Mammary epithelial cell (primary cell): ENCODE measurements at regions of chr1 and their contacts with region 1.

Region 1: DNA sequence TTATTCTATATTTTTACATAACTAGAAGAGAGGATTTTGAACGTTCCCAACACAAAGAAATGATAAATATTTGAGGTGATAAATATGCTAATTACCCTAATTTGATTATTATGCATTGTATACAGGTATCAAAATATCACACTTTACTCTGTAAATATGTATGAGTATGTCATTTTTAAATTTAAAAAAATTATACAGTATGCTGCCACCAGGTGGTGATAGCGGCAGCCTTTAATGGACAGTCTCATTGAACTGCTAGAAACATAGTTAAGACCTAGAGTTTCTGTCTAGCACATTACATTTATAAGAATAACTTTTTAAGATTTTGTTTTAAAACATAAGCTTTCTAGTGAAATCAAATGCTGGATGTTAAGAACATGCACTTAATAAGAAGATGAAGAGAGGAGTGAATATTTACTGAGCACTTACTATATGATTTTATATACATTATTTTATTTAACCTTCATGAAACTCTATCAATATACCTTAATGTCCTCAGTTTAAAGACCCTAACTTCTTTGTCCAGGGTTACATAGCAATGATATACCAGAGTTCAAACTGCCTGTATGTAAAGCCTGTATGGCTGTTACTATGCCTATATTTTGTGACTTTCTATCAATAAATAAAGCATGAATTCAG is 207.1 kb downstream of the NUF2 start:
- DNase-seq: peak; percentile 5
- H3K4me3 ChIP-seq: no peak overlapping the region
- H3K27ac ChIP-seq: no peak overlapping the region
- H3K4me1 ChIP-seq: no peaks in the 10 kb centered on the region
- H3K27me3 ChIP-seq: no peaks in the 10 kb centered on the region
- CTCF ChIP-seq: peak; percentile 51 to 62

Region 2: GRCh38 chr1:162847839-162848453 is 680.9 kb before region 1 on chr1:
- CTCF ChIA-PET with region 1: no interaction called
- dilution Hi-C with region 1: no loop called
- in situ Hi-C with region 1: no loop called
- intact Hi-C with region 1: loop called (anchors 10 kb)
- DNase-seq: peak; percentile 46
- H3K4me3 ChIP-seq: no peak overlapping the region
- H3K27ac ChIP-seq: no peak overlapping the region
- H3K4me1 ChIP-seq: no peaks in the 10 kb centered on the region
- H3K27me3 ChIP-seq: no peaks in the 10 kb centered on the region
- CTCF ChIP-seq: peak; percentile 91 to 94

Region 3: DNA sequence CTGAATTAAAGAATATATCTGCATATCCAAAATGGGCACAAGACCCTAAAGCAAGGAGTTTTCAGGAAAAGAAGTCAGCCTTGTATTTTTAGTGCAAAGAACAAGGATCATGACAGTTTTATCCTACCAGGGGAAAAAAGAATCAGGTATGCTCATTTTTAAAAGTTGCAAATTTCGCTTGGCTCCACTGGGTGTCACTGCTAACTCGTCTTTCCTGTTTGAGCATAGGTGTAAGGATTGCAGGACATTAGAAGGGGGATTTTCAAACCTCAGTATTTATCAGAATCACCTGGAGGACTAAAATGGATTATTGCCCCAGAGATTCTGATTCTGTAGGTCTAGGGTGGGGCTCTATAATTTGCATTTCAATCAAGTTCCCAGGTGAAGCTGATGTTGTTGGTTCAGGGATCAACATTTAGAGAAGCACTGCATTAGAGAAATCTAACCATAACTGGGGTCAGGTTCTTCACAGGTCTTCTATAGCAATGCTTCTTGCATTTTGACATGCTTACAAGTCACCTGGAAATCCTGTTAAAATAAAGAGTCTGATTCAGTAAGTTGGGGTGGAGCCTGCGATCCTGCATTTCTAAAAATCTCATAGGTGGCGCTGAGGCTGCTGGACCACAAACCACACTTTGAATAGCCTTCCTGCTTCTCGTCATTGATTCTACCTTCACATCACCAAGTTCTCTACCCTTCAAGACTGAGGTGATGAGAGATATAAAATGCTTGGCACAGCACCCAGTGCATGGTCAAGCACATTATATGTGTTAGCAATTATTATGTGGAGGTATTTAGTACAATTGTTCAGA is 167.5 kb before region 1 on chr1:
- CTCF ChIA-PET with region 1: no interaction called
- dilution Hi-C with region 1: no loop called
- in situ Hi-C with region 1: no loop called
- intact Hi-C with region 1: loop called (anchors 5 kb)
- DNase-seq: peak; percentile 12
- H3K4me3 ChIP-seq: no peak overlapping the region
- H3K27ac ChIP-seq: no peak overlapping the region
- H3K4me1 ChIP-seq: no peaks in the 10 kb centered on the region
- H3K27me3 ChIP-seq: no peaks in the 10 kb centered on the region
- CTCF ChIP-seq: peak; percentile 40 to 63

Region 4: DNA sequence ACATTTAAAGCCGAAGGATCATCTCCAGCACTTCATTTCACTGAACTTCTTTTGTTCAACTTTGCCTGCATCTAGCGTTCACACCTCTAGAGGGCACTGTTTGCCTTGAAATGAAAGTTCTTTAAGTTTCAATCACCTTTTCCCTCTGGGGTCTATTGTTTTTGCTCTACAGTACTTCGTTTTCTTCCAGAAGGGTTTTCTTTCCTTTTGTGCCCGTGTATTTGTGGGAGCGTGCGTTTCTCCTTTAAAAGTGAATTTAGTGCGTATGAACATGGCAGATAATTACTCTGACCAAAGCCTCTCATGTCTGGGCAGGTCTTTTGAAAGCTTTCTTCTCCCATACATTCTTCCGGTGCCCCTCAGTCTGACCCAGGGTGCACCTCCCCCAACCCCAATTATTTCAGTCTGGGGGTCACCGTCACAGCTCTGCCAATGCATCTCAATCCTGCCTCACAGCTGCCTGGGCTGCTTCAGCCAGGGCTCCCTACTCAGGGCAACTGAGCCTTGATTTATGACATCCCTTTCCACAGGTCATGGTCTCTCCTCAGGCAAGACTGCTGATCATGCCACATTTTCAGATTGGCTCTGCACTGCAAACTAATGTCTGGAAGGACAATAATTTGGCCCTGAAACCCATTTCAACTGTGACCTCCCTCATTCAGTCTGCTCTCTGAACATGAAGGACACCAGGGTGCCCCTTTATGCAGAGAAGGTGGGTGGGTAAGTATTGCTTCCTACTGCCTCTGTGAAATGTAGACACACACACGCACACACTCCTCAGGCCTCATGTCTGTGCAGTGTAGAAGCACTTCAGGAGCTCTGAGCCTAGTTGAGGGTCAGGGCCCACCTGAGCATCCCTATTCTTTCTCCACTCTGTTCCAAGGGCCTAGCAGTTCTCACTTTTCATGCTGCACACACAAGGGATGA is 118.5 kb before region 1 on chr1:
- CTCF ChIA-PET with region 1: no interaction called
- dilution Hi-C with region 1: no loop called
- in situ Hi-C with region 1: no loop called
- intact Hi-C with region 1: loop called (anchors 2 kb)
- DNase-seq: peak; percentile 26
- H3K4me3 ChIP-seq: no peak overlapping the region
- H3K27ac ChIP-seq: no peak overlapping the region
- H3K4me1 ChIP-seq: no peaks in the 10 kb centered on the region
- H3K27me3 ChIP-seq: no peaks in the 10 kb centered on the region
- CTCF ChIP-seq: peak; percentile 79 to 87